Caco-2 (cell line): ENCODE measurements at regions of chr11 and their contacts with region 1.

Region 1: GRCh38 chr11:62787005-62787759 is at the start of gene TMEM179B:
- DNase-seq: peak; percentile 98
- H3K4me3 ChIP-seq: peak within 1 kb of the TSS; percentile 79
- H3K4me3 Mint-ChIP-seq: peak within 1 kb of the TSS; percentile 91
- H3K27ac Mint-ChIP-seq: peak within 1 kb of the TSS; percentile 95
- H3K4me1 ChIP-seq: peaks cover 7% of the 10 kb centered on the region
- H3K4me1 Mint-ChIP-seq: peaks cover 9% of the 10 kb centered on the region
- H3K27me3 ChIP-seq: no peaks in the 10 kb centered on the region
- H3K27me3 Mint-ChIP-seq: no peaks in the 10 kb centered on the region
- CTCF ChIP-seq: peak; percentile 24 to 82
- total RNA-seq, gene TMEM179B: 59.9 and 68.4 TPM in 2 replicates

Region 2: DNA sequence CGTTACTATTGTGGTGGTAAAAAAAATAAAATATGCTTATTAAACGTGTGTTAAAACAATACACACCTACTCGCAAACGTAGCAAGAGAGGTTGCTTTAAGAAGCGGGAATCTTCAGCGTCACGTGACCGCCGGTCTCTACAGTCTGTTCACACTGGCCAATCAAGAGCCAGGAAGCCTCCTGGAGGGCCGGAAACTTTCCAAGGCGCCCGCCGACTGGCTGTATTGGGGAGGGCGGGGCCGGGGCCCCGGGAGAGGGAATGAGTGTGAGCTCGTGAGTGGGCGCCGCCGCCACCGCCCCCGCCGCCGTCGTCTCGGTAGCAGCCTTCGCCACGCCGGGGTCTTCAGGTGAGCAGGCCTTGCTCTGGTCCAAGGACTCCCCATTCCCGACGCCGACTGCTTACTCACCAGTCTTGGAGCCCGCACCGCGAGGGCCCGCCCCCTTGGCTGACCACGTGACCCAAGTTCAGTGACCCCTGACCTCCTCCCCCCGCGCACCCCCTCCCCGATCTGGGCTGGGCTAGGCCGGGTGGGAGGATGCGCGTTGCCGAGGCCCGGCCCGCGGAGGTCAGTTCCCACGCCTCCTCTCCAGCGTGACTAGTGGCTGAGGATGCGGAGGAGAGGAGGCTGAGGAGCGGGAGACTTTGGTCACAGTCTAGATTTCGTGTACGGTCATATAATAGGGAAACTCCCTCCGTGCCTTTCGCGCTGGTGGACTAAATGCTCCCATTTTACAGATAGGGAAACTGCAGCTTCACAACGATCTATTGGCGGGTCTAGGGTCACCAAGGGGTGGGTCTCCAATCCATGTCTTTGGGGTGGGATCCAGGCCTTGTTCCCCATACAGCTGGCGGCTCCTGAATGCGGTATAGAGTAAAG is 15.8 kb before region 1 on chr11 and contains the start of gene TAF6L:
- CTCF ChIA-PET with region 1: interaction called, 25 read pairs
- POLR2A ChIA-PET with region 1: interaction called, 20 read pairs
- intact Hi-C with region 1: loop called (anchors 1 kb)
- DNase-seq: peak; percentile 97 to 99
- H3K4me3 ChIP-seq: peak within 1 kb of the TSS; percentile 81
- H3K4me3 Mint-ChIP-seq: peak within 1 kb of the TSS; percentile 92
- H3K27ac Mint-ChIP-seq: peak within 1 kb of the TSS; percentile 99
- H3K4me1 ChIP-seq: peaks cover 6% of the 10 kb centered on the region
- H3K4me1 Mint-ChIP-seq: no peaks in the 10 kb centered on the region
- H3K27me3 ChIP-seq: no peaks in the 10 kb centered on the region
- H3K27me3 Mint-ChIP-seq: no peaks in the 10 kb centered on the region
- CTCF ChIP-seq: no peak
- total RNA-seq, gene TAF6L: 26.8 and 30.1 TPM in 2 replicates

Region 3: DNA sequence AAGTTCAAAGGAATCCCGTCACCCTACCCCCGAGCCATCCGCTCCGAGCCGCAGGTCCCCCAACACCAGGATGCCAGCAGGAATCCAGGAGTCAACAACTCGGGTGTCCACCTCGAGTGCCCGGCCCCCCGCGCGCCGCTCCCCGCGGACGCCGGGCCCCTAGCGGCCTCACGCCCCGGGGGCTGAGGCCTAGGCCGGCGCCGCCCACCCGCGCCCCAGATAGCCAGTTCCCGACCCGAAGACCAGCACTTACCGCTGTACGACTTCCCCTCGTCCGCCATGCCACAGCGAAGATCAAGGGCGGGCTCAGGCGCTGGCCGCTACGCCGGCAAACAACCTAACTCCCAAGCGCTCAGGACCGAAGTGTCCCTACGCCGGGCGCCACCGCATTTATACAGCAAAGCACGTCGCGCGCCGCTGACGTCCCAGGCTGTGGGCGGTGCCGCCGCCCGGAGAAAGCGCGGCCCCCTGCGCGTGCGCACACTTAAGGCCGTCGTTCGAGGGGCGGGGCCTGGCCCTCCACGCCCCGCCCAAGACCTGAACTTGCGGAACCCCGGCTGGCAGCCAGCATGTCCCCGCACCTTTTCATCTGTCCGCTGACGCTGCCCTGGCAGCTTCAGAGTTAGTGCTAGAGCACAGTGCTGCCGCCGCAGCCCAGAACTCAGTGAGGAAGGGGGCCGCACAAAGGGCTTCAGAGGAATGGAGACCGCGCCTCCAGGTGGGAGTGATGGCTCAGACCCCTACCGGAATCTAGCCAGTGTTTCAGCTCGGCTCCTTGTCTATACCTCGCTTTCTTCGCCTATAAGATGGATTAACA is 18.1 kb after region 1 on chr11 and contains the start of gene NXF1:
- CTCF ChIA-PET with region 1: interaction called, 15 read pairs
- POLR2A ChIA-PET with region 1: interaction called, 7 read pairs
- intact Hi-C with region 1: loop called (anchors 1 kb)
- DNase-seq: peak; percentile 94 to 98
- H3K4me3 ChIP-seq: peak within 1 kb of the TSS; percentile 58
- H3K4me3 Mint-ChIP-seq: peak within 1 kb of the TSS; percentile 92
- H3K27ac Mint-ChIP-seq: peak within 1 kb of the TSS; percentile 98
- H3K4me1 ChIP-seq: no peaks in the 10 kb centered on the region; the same call in 1 of the 2 replicates
- H3K4me1 Mint-ChIP-seq: peaks cover 11% of the 10 kb centered on the region
- H3K27me3 ChIP-seq: no peaks in the 10 kb centered on the region
- H3K27me3 Mint-ChIP-seq: no peaks in the 10 kb centered on the region
- CTCF ChIP-seq: peak in 1 of 2 experiments; percentile 27
- total RNA-seq, gene NXF1: 77.5 and 77.6 TPM in 2 replicates

Region 4: DNA sequence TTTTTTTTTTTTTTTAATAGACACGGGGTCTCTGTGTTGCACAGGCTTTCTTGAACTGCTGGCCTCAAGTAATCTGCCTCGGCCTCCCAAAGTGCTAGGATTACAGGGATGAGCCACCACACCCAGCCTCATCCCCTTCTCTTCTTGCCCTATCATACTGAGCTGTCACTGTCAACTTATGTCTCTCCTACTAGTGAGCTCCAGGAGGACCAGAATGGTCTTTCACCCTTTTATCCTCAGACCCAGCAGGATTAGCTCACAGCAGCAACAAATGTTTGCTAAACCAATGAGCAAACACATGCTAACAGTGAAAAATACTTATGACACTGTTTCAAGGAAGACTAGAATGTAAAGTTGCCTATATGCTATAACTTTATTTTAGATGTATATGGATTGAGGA is 24.5 kb after region 1 on chr11:
- CTCF ChIA-PET with region 1: interaction called, 15 read pairs
- POLR2A ChIA-PET with region 1: interaction called, 10 read pairs
- intact Hi-C with region 1: no loop called
- DNase-seq: no peak
- H3K4me3 ChIP-seq: no peak overlapping the region
- H3K4me3 Mint-ChIP-seq: no peak overlapping the region
- H3K27ac Mint-ChIP-seq: no peak overlapping the region
- H3K4me1 ChIP-seq: no peaks in the 10 kb centered on the region; the same call in 1 of the 2 replicates
- H3K4me1 Mint-ChIP-seq: no peaks in the 10 kb centered on the region
- H3K27me3 ChIP-seq: no peaks in the 10 kb centered on the region
- H3K27me3 Mint-ChIP-seq: no peaks in the 10 kb centered on the region
- CTCF ChIP-seq: no peak

Region 5: DNA sequence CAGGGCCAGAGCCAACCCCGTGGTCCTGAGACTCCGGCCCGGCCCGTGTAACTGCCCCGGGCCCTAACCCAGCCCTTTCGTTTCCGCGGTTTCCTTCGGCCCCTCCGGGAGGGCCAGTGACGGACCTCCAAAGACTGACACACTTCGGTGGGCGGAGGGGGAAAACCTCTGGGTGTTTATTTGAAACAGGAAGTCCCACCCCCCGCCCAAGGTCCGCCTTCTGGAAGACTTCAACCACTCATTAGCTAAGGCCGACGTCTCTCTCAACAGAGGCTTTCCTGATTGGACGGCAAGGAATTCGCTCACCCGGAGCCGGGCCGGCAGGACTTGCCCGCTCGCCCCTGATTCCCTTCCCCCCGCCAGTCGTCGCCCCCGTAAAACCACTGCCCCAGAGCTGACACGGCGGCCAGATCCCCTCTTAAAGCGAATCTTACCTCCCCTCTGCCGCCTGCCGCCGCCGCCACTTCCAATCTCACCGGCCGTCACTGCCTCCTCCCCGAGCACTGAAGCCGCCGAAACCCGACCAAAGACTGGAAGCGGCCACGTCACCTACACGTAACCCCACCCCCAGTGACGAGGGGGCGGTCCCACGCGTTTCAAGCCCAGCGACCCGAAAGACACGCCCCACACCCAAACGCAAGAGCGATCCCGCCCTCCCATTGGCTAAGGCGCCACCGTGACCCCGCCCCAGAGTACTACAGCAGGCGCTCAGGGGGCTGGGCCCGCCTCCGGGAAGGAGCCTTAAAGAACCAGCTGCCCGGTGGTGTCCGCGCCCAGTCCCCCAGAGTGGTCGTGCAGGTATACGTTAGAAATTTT is 44.5 kb after region 1 on chr11 and contains the start of gene STX5:
- CTCF ChIA-PET with region 1: interaction called, 20 read pairs
- POLR2A ChIA-PET with region 1: interaction called, 10 read pairs
- intact Hi-C with region 1: loop called (anchors 2 kb)
- DNase-seq: peak; percentile 99
- H3K4me3 ChIP-seq: peak within 1 kb of the TSS; percentile 66
- H3K4me3 Mint-ChIP-seq: peak within 1 kb of the TSS; percentile 90
- H3K27ac Mint-ChIP-seq: peak within 1 kb of the TSS; percentile 100
- H3K4me1 ChIP-seq: no peaks in the 10 kb centered on the region
- H3K4me1 Mint-ChIP-seq: peaks cover 5% of the 10 kb centered on the region
- H3K27me3 ChIP-seq: no peaks in the 10 kb centered on the region
- H3K27me3 Mint-ChIP-seq: no peaks in the 10 kb centered on the region
- CTCF ChIP-seq: no peak
- total RNA-seq, gene STX5: 39.9 and 44.2 TPM in 2 replicates

Region 6: DNA sequence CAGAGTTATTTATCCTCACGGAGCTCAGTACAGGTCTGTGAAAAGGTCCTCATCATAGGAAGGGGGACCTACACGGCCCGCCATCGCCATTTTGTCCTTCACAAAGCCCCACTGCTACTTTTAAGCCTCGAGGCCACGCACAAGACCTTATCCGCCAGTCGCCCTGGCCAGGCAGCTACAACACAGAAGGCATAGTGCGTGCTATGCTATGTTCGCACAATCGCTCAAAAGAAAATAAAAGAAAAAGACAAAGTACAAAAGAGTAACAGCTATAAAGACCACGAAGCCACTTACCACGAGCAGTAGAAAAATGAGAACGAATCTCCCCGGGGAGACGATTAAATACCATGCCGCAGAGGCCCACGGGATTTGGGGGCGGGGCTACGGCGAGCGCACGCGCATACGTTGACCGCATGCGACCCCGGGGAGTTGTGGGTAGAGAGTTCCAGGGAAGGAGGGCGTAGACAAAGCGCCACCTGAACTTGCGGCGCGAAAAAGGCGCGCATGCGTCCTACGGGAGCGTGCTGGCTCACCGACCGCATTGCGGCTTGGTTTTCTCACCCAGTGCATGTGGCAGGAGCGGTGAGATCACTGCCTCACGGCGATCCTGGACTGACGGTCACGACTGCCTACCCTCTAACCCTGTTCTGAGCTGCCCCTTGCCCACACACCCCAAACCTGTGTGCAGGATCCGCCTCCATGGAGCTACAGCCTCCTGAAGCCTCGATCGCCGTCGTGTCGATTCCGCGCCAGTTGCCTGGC is 68.6 kb after region 1 on chr11:
- CTCF ChIA-PET with region 1: interaction called, 6 read pairs
- POLR2A ChIA-PET with region 1: interaction called, 15 read pairs
- intact Hi-C with region 1: no loop called
- DNase-seq: peak; percentile 98 to 99
- H3K4me3 ChIP-seq: peak overlapping the region; percentile 92
- H3K4me3 Mint-ChIP-seq: peak overlapping the region; percentile 77
- H3K27ac Mint-ChIP-seq: peak overlapping the region; percentile 85
- H3K4me1 ChIP-seq: peaks cover 46% of the 10 kb centered on the region
- H3K4me1 Mint-ChIP-seq: peaks cover 45% of the 10 kb centered on the region
- H3K27me3 ChIP-seq: no peaks in the 10 kb centered on the region
- H3K27me3 Mint-ChIP-seq: no peaks in the 10 kb centered on the region
- CTCF ChIP-seq: no peak

Region 7: DNA sequence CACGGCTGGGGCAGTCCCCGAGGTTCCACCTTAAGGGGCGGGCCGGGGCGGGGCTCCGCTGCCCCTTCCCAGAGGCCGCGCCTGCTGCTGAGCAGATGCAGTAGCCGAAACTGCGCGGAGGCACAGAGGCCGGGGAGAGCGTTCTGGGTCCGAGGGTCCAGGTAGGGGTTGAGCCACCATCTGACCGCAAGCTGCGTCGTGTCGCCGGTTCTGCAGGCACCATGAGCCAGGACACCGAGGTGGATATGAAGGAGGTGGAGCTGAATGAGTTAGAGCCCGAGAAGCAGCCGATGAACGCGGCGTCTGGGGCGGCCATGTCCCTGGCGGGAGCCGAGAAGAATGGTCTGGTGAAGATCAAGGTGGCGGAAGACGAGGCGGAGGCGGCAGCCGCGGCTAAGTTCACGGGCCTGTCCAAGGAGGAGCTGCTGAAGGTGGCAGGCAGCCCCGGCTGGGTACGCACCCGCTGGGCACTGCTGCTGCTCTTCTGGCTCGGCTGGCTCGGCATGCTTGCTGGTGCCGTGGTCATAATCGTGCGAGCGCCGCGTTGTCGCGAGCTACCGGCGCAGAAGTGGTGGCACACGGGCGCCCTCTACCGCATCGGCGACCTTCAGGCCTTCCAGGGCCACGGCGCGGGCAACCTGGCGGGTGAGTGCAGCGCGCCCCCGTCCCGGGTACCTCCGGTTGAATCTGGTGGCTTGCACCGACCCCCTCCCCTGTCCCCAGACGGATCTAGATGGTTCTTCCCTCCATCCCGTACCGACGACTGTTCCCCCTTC is 93.8 kb after region 1 on chr11 and contains the start of gene SLC3A2:
- CTCF ChIA-PET with region 1: interaction called, 6 read pairs
- POLR2A ChIA-PET with region 1: interaction called, 14 read pairs
- intact Hi-C with region 1: loop called (anchors 2 kb)
- DNase-seq: peak; percentile 87 to 92
- H3K4me3 ChIP-seq: peak within 1 kb of the TSS; percentile 99
- H3K4me3 Mint-ChIP-seq: peak within 1 kb of the TSS; percentile 97
- H3K27ac Mint-ChIP-seq: peak within 1 kb of the TSS; percentile 99
- H3K4me1 ChIP-seq: peaks cover 51% of the 10 kb centered on the region
- H3K4me1 Mint-ChIP-seq: peaks cover 43% of the 10 kb centered on the region
- H3K27me3 ChIP-seq: no peaks in the 10 kb centered on the region
- H3K27me3 Mint-ChIP-seq: no peaks in the 10 kb centered on the region
- CTCF ChIP-seq: peak; percentile 77 to 78
- total RNA-seq, gene SLC3A2: 763 and 879 TPM in 2 replicates